Spleen (tissue), 13 donors: ENCODE measurements at regions of chr15 and their contacts with region 1.

Region 1: GRCh38 chr15:40906091-40906990 is 12.1 kb downstream of the VPS18 start:
- DNase-seq: peak; percentile 97
- H3K4me3 ChIP-seq: peak overlapping the region; percentile 46 to 77 (median 51)
- H3K27ac ChIP-seq: peak overlapping the region; percentile 92 to 97 (median 92)
- H3K4me1 ChIP-seq: peaks cover 45 to 100% (median 82%) of the 10 kb centered on the region in 6 donors
- H3K27me3 ChIP-seq: no peaks in the 10 kb centered on the region
- CTCF ChIP-seq: peak; percentile 78 to 98 (median 96)
- POLR2A ChIP-seq: peak in 1 of 3 donors; percentile 24

Region 2: GRCh38 chr15:40787344-40787841 is 118.9 kb before region 1 on chr15:
- intact Hi-C with region 1: no loop called
- DNase-seq: no peak
- H3K4me3 ChIP-seq: no peak overlapping the region
- H3K27ac ChIP-seq: peak overlapping the region in 3 of 8 donors; percentile 5 to 21 (median 7)
- H3K4me1 ChIP-seq: peaks cover 0 to 57% (median 23%) of the 10 kb centered on the region in 6 donors
- H3K27me3 ChIP-seq: no peaks in the 10 kb centered on the region
- CTCF ChIP-seq: no peak
- POLR2A ChIP-seq: no peak

Region 3: GRCh38 chr15:40941528-40942336 is 35.4 kb after region 1 on chr15:
- intact Hi-C with region 1: loop called (anchors 5 kb)
- DNase-seq: peak; percentile 95
- H3K4me3 ChIP-seq: peak overlapping the region; percentile 35 to 76 (median 50)
- H3K27ac ChIP-seq: peak overlapping the region; percentile 87 to 93 (median 88)
- H3K4me1 ChIP-seq: peaks cover 31 to 70% (median 58%) of the 10 kb centered on the region in 6 donors
- H3K27me3 ChIP-seq: no peaks in the 10 kb centered on the region
- CTCF ChIP-seq: peak in 8 of 11 experiments; percentile 17 to 88 (median 76)
- POLR2A ChIP-seq: peak in 1 of 3 donors; percentile 6

Region 4: DNA sequence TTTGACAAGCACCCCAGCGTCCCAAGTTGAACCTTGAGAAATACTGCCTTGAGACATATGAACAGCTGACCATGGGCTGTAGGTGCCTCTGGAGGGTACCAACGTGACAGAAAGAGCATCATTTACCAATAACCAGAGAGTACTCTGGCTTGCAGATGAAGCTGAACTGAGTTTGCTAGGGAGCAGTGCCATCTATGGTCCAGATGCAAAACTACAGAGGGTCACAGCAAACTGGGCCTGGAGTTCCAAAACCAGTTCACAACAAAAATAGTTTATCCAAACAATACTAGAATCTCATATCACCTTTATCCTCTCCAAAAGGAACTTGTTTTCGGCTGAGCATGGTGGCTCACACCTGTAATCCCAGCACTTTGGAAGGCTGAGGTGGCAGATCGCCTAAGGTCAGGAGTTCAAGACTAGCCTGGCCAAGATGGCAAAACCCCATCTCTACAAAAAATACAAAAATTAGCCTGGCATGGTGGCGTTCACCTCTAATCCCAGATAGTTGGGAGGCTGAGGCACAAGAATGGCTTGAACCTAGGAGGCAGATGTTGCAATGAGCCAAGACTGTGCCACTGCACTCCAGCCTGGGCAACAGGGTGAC is 116.2 kb after region 1 on chr15:
- intact Hi-C with region 1: loop called (anchors 5 kb)
- DNase-seq: no peak
- H3K4me3 ChIP-seq: no peak overlapping the region
- H3K27ac ChIP-seq: no peak overlapping the region
- H3K4me1 ChIP-seq: peaks cover 3 to 34% (median 19%) of the 10 kb centered on the region in 6 donors
- H3K27me3 ChIP-seq: no peaks in the 10 kb centered on the region
- CTCF ChIP-seq: peak in 10 of 11 experiments; percentile 44 to 74 (median 67)
- POLR2A ChIP-seq: no peak

Region 5: GRCh38 chr15:41116116-41116871 is 210.0 kb after region 1 on chr15 and contains the start of gene INO80:
- intact Hi-C with region 1: loop called (anchors 10 kb)
- DNase-seq: peak; percentile 98
- H3K4me3 ChIP-seq: peak within 1 kb of the TSS; percentile 57 to 95 (median 89)
- H3K27ac ChIP-seq: peak within 1 kb of the TSS; percentile 99 to 100 (median 100)
- H3K4me1 ChIP-seq: peaks cover 15 to 51% (median 32%) of the 10 kb centered on the region in 6 donors
- H3K27me3 ChIP-seq: no peaks in the 10 kb centered on the region
- CTCF ChIP-seq: peak in 6 of 11 experiments; percentile 10 to 52 (median 42)
- POLR2A ChIP-seq: peak in 2 of 3 donors; percentile 14 to 64
- total RNA-seq, gene INO80: 24.2 to 39.4 (median 27.2) TPM